Activated CD8-positive, alpha-beta T cell treated with anti-CD3 and anti-CD28 coated beads for 36 hours (primary cell): ENCODE measurements at regions of chr10 and their contacts with region 1.

Region 1: GRCh38 chr10:46030091-46030937 is at the start of gene NCOA4:
- DNase-seq: peak; percentile 98
- ATAC-seq: peak; percentile 97
- H3K4me3 Mint-ChIP-seq: peak within 1 kb of the TSS; percentile 88
- H3K27ac Mint-ChIP-seq: peak within 1 kb of the TSS; percentile 89
- H3K4me1 Mint-ChIP-seq: peaks cover 43% of the 10 kb centered on the region
- H3K27me3 Mint-ChIP-seq: no peaks in the 10 kb centered on the region
- CTCF ChIP-seq: peak; percentile 51
- total RNA-seq, gene NCOA4: 86.2 to 86.6 TPM

Region 2: DNA sequence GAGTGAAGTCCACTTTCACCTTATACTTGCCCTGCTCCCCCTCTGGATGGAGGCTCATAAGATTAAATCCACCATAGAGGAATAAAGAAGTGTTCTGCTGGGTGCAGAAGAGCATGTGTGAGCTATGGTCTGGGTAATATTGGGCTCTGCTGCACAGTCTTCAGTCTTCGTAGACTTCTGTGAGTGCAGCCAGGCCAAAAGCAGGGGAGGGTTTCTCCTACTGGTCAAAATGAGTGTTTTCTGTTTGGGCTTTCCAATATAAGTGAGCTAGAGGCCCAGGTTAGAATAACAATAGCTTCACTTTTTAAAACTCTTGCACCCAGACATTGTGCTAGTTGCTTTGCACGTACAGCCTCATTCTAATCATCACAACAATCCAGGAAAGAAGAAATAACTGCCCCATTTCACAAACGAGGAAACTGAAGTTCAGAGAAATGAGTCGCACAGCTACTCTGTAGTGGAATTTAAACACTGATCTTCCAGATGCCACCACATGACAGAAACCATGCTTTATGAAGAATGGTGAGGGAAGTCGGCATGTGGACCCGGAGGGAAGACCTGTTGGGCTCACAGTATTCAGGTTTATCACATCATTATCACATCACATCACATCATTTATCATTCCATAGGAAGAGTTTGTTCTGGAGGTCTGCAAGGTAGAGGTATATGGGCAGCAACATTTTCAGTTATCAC is 39.6 kb after region 1 on chr10:
- CTCF ChIA-PET with region 1: no interaction called
- POLR2A ChIA-PET with region 1: no interaction called
- intact Hi-C with region 1: no loop called
- DNase-seq: no peak
- ATAC-seq: no peak
- H3K4me3 Mint-ChIP-seq: no peak overlapping the region
- H3K27ac Mint-ChIP-seq: no peak overlapping the region
- H3K4me1 Mint-ChIP-seq: no peaks in the 10 kb centered on the region
- H3K27me3 Mint-ChIP-seq: no peaks in the 10 kb centered on the region
- CTCF ChIP-seq: no peak

Region 3: GRCh38 chr10:46092524-46093081 is 62.3 kb after region 1 on chr10:
- CTCF ChIA-PET with region 1: no interaction called
- POLR2A ChIA-PET with region 1: no interaction called
- intact Hi-C with region 1: loop called (anchors 10 kb)
- DNase-seq: peak; percentile 37
- ATAC-seq: no peak
- H3K4me3 Mint-ChIP-seq: no peak overlapping the region
- H3K27ac Mint-ChIP-seq: no peak overlapping the region
- H3K4me1 Mint-ChIP-seq: peaks cover 5% of the 10 kb centered on the region
- H3K27me3 Mint-ChIP-seq: no peaks in the 10 kb centered on the region
- CTCF ChIP-seq: no peak